Mammary epithelial cell (primary cell): ENCODE measurements at regions of chr1 and their contacts with region 1.

Region 1: GRCh38 chr1:147515046-147515869 is 26.0 kb upstream of the BCL9 start:
- DNase-seq: peak; percentile 64
- H3K4me3 ChIP-seq: no peak overlapping the region
- H3K27ac ChIP-seq: no peak overlapping the region
- H3K4me1 ChIP-seq: no peaks in the 10 kb centered on the region
- H3K27me3 ChIP-seq: peaks cover 3% of the 10 kb centered on the region
- CTCF ChIP-seq: peak in 1 of 2 donors; percentile 47

Region 2: DNA sequence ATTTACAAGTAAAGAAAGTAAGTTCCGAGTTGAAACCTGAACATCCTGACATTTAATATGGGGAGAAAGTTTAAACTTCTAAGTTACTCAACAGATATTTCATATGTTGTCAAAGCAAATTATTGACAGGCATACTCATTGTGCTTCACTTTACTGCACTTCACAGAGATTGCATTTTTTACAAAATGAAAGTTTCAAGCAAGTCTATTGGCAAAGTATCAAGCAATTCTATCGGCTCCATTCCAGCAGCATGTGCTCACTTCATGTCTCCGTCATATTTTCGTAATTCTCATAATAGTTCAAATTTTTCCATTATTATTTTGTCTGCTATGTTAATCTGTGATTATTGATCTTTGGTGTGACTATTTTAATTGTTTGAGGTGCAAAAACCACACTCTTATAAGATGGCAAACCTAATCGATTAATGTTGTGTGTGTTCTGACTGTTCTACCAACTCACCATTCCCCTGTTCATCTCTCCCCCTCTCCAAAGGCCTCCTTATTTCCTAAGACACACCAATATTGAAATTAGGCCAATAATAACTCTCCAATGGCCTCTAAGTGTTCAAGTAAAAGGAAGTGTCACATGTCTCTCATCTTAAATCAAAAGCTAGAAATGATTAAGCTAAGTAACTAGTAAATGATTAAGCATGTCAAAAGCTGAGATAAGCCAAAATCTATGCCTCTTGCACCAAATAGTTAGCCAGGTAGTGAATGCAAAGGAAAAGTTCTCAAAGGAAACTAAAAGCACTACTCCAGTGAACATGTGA is 42.1 kb before region 1 on chr1:
- CTCF ChIA-PET with region 1: no interaction called
- dilution Hi-C with region 1: no loop called
- in situ Hi-C with region 1: no loop called
- intact Hi-C with region 1: no loop called
- DNase-seq: no peak
- H3K4me3 ChIP-seq: no peak overlapping the region
- H3K27ac ChIP-seq: no peak overlapping the region
- H3K4me1 ChIP-seq: no peaks in the 10 kb centered on the region
- H3K27me3 ChIP-seq: peaks cover 7% of the 10 kb centered on the region
- CTCF ChIP-seq: no peak

Region 3: DNA sequence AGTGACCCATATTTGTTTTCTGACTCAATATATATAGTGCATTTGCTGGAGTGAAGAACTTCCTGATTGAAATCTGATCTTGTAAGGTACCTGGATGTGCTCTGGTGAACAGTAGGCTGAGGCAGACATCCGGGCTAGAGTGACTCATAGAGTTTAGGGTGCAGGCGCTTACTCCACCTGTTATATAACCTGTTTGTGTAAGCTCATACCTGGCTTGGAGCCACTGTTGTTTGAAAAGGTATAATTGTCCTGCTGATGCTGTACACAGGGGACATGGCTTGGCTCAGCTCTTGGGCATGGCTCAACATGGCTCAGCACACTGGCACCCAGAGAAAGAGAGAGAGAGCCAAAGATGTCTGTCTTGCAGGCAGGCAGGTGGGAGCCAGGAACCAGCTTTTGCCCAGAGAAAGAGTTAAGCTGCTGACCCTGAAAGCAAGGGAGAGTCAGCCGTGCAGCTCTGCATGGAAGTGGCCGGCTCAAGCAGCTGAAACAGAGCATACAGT is 201.9 kb after region 1 on chr1:
- CTCF ChIA-PET with region 1: no interaction called
- dilution Hi-C with region 1: no loop called
- in situ Hi-C with region 1: loop called in 1 of 2 experiments (anchors 10 kb)
- intact Hi-C with region 1: no loop called
- DNase-seq: peak; percentile 91
- H3K4me3 ChIP-seq: no peak overlapping the region
- H3K27ac ChIP-seq: no peak overlapping the region
- H3K4me1 ChIP-seq: peaks cover 29% of the 10 kb centered on the region
- H3K27me3 ChIP-seq: no peaks in the 10 kb centered on the region
- CTCF ChIP-seq: no peak